PC-9 (cell line): ENCODE measurements at regions of chr7 and their contacts with region 1.

Region 1: GRCh38 chr7:45174966-45175765 is 17.6 kb downstream of the RAMP3 start:
- DNase-seq: no peak
- H3K4me3 ChIP-seq: no peak overlapping the region
- H3K27ac ChIP-seq: no peak overlapping the region
- H3K4me1 ChIP-seq: no peaks in the 10 kb centered on the region
- H3K27me3 ChIP-seq: peaks cover 81% of the 10 kb centered on the region
- CTCF ChIP-seq: no peak

Region 2: GRCh38 chr7:45080265-45080962 is 94.8 kb before region 1 on chr7:
- CTCF ChIA-PET with region 1: no interaction called
- POLR2A ChIA-PET with region 1: no interaction called
- intact Hi-C with region 1: no loop called
- DNase-seq: no peak
- H3K4me3 ChIP-seq: no peak overlapping the region
- H3K27ac ChIP-seq: no peak overlapping the region
- H3K4me1 ChIP-seq: peaks cover 11% of the 10 kb centered on the region
- H3K27me3 ChIP-seq: no peaks in the 10 kb centered on the region
- CTCF ChIP-seq: no peak

Region 3: GRCh38 chr7:45363669-45364068 is 188.5 kb after region 1 on chr7:
- CTCF ChIA-PET with region 1: no interaction called
- POLR2A ChIA-PET with region 1: no interaction called
- intact Hi-C with region 1: no loop called
- DNase-seq: no peak
- H3K4me3 ChIP-seq: no peak overlapping the region
- H3K27ac ChIP-seq: no peak overlapping the region
- H3K4me1 ChIP-seq: no peaks in the 10 kb centered on the region
- H3K27me3 ChIP-seq: peaks cover 83% of the 10 kb centered on the region
- CTCF ChIP-seq: no peak

Region 4: DNA sequence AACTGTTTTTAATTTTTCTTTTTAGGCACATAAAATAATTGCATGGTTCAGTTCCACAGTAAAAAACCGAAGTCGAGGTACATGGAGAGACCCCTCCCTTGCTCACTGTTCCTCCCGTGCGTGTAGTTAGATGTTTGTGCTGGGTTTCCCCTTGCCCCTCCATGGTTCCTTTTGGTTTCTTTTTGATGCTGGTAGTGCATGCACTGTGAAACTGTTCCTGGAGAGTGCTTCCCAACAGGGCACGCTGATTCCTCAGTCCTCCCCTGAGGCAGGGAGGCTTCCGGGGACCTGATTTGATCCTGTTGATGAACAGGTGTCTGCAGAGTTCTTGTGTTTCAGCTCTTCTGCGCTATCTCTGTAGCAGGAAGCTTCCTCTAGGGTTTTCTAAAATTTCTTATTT is 468.5 kb after region 1 on chr7:
- CTCF ChIA-PET with region 1: no interaction called
- POLR2A ChIA-PET with region 1: no interaction called
- intact Hi-C with region 1: loop called (anchors 5 kb)
- DNase-seq: no peak
- H3K4me3 ChIP-seq: no peak overlapping the region
- H3K27ac ChIP-seq: no peak overlapping the region
- H3K4me1 ChIP-seq: no peaks in the 10 kb centered on the region
- H3K27me3 ChIP-seq: peaks cover 52% of the 10 kb centered on the region
- CTCF ChIP-seq: no peak